Activated T-helper 2 cell treated with anti-CD3 and anti-CD28 coated beads, Interferon-gamma antibody, Interleukin-2, Interleukin-4, amounts not matched to agents 10 μg/mL and 5 μg/mL and 100 μg/mL, durations not matched to agents 14 hours and 24 hours and 36 hours (primary cell): ENCODE measurements at regions of chr1 and their contacts with region 1.

Region 1: GRCh38 chr1:9957726-9958125 is 14.5 kb downstream of the NMNAT1 start:
- DNase-seq: no peak
- H3K4me3 Mint-ChIP-seq: no peak overlapping the region
- H3K27ac Mint-ChIP-seq: no peak overlapping the region
- H3K4me1 Mint-ChIP-seq: no peaks in the 10 kb centered on the region
- H3K27me3 Mint-ChIP-seq: no peaks in the 10 kb centered on the region

Region 2: GRCh38 chr1:10152709-10153284 is 195.1 kb after region 1 on chr1:
- intact Hi-C with region 1: loop called (anchors 5 kb)
- DNase-seq: no peak
- H3K4me3 Mint-ChIP-seq: no peak overlapping the region
- H3K27ac Mint-ChIP-seq: no peak overlapping the region
- H3K4me1 Mint-ChIP-seq: no peaks in the 10 kb centered on the region
- H3K27me3 Mint-ChIP-seq: no peaks in the 10 kb centered on the region